ENCODE measurements at regions of chr1 and their contacts with region 1.

Region 1: DNA sequence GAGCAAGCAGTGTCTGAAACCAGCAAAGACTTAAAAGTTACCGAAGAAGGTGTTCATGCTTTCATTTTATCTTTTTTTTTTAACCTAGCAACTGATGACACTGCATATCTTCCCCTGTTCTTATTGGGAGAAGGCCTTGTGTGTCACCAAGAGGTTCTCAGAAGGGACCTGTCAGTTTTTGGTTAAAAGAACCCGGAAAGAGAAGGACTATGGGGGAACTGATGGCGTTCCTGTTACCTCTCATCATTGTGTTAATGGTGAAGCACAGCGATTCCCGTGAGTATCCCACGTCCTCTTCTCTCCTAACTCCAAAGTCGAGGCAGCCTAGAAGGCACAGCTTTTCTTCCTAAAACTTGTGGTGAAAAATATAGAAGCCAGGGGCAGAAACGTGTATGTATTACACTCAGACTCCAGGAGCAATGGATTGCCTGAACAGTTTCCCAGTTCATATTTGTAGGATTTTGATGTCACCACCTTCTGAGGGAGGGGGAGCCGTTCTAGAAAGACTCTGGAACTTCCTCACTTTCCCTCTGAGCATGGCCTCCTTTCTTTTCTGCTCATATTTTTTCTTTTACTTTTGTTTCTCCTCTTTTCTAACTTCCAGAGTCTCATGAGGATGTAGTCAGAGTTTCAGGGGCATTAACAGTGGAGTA is at the start of gene MR1:
- DNase-seq: peak; percentile 42
- H3K4me3 Mint-ChIP-seq: peak within 1 kb of the TSS; percentile 93
- H3K27ac Mint-ChIP-seq: peak within 1 kb of the TSS; percentile 98
- H3K4me1 Mint-ChIP-seq: peaks cover 50% of the 10 kb centered on the region
- H3K27me3 Mint-ChIP-seq: peaks cover 2% of the 10 kb centered on the region
- total RNA-seq, gene MR1: 13.8 and 18.2 TPM in 2 replicates

Region 2: GRCh38 chr1:180881806-180882509 is 152.0 kb before region 1 on chr1:
- intact Hi-C with region 1: loop called (anchors 10 kb)
- DNase-seq: no peak
- H3K4me3 Mint-ChIP-seq: no peak overlapping the region
- H3K27ac Mint-ChIP-seq: no peak overlapping the region
- H3K4me1 Mint-ChIP-seq: peaks cover 4% of the 10 kb centered on the region
- H3K27me3 Mint-ChIP-seq: no peaks in the 10 kb centered on the region

Region 3: GRCh38 chr1:180997843-180998504 is 36.0 kb before region 1 on chr1:
- intact Hi-C with region 1: no loop called
- DNase-seq: no peak
- H3K4me3 Mint-ChIP-seq: no peak overlapping the region
- H3K27ac Mint-ChIP-seq: no peak overlapping the region
- H3K4me1 Mint-ChIP-seq: peaks cover 9% of the 10 kb centered on the region
- H3K27me3 Mint-ChIP-seq: no peaks in the 10 kb centered on the region

Region 4: GRCh38 chr1:181021811-181022434 is 12.0 kb before region 1 on chr1:
- intact Hi-C with region 1: loop called (anchors 1 kb)
- DNase-seq: peak; percentile 41
- H3K4me3 Mint-ChIP-seq: peak overlapping the region; percentile 87
- H3K27ac Mint-ChIP-seq: peak overlapping the region; percentile 95
- H3K4me1 Mint-ChIP-seq: peaks cover 37% of the 10 kb centered on the region
- H3K27me3 Mint-ChIP-seq: peaks cover 17% of the 10 kb centered on the region

Region 5: DNA sequence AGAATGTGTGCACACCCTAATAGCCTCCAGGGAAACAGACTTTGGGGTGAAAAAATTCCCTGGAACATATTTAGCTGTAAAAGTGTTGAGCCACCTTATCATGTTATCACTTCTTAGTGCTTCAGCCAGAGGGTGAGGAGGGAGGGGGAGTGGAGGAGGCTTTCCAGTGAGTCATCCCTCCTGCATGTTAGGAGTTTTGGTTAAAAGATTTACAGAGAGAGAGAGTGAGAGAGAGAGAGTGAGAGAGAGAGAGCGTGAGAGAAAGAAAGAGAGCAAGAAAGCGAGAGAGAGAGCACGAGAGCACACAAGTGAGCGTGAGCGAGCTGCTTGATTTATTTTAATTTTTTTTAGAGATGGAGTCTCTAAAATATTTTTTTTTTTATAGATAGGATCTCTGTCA is 435.9 kb after region 1 on chr1:
- intact Hi-C with region 1: no loop called
- DNase-seq: no peak
- H3K4me3 Mint-ChIP-seq: no peak overlapping the region
- H3K27ac Mint-ChIP-seq: no peak overlapping the region
- H3K4me1 Mint-ChIP-seq: peaks cover 3% of the 10 kb centered on the region
- H3K27me3 Mint-ChIP-seq: peaks cover 33% of the 10 kb centered on the region